ENCODE measurements at regions of chr6 and their contacts with region 1.

Region 1: GRCh38 chr6:132669690-132670291 is 10.8 kb upstream of the TAAR1 start:
- DNase-seq: no peak
- H3K4me3 ChIP-seq: no peak overlapping the region
- H3K27ac ChIP-seq: no peak overlapping the region
- H3K4me1 ChIP-seq: no peaks in the 10 kb centered on the region
- H3K27me3 ChIP-seq: no peaks in the 10 kb centered on the region
- CTCF ChIP-seq: peak; percentile 31

Region 2: GRCh38 chr6:132530293-132530974 is 139.4 kb before region 1 on chr6:
- intact Hi-C with region 1: loop called (anchors 10 kb)
- DNase-seq: peak; percentile 74
- H3K4me3 ChIP-seq: no peak overlapping the region
- H3K27ac ChIP-seq: no peak overlapping the region
- H3K4me1 ChIP-seq: no peaks in the 10 kb centered on the region
- H3K27me3 ChIP-seq: no peaks in the 10 kb centered on the region
- CTCF ChIP-seq: peak; percentile 89

Region 3: GRCh38 chr6:132715204-132715603 is 45.4 kb after region 1 on chr6:
- intact Hi-C with region 1: loop called (anchors 5 kb)
- DNase-seq: peak; percentile 47
- H3K4me3 ChIP-seq: no peak overlapping the region
- H3K27ac ChIP-seq: no peak overlapping the region
- H3K4me1 ChIP-seq: no peaks in the 10 kb centered on the region
- H3K27me3 ChIP-seq: no peaks in the 10 kb centered on the region
- CTCF ChIP-seq: peak; percentile 16

Region 4: GRCh38 chr6:132768051-132768517 is 98.3 kb after region 1 on chr6:
- intact Hi-C with region 1: loop called (anchors 5 kb)
- DNase-seq: peak; percentile 56
- H3K4me3 ChIP-seq: no peak overlapping the region
- H3K27ac ChIP-seq: no peak overlapping the region
- H3K4me1 ChIP-seq: no peaks in the 10 kb centered on the region
- H3K27me3 ChIP-seq: no peaks in the 10 kb centered on the region
- CTCF ChIP-seq: peak; percentile 48

Region 5: GRCh38 chr6:132937466-132937906 is 267.7 kb after region 1 on chr6:
- intact Hi-C with region 1: no loop called
- DNase-seq: peak; percentile 30
- H3K4me3 ChIP-seq: no peak overlapping the region
- H3K27ac ChIP-seq: no peak overlapping the region
- H3K4me1 ChIP-seq: no peaks in the 10 kb centered on the region
- H3K27me3 ChIP-seq: no peaks in the 10 kb centered on the region
- CTCF ChIP-seq: peak; percentile 18